Activated CD4-positive, alpha-beta memory T cell treated with anti-CD3 and anti-CD28 coated beads for 36 hours (primary cell): ENCODE measurements at regions of chr15 and their contacts with region 1.

Region 1: DNA sequence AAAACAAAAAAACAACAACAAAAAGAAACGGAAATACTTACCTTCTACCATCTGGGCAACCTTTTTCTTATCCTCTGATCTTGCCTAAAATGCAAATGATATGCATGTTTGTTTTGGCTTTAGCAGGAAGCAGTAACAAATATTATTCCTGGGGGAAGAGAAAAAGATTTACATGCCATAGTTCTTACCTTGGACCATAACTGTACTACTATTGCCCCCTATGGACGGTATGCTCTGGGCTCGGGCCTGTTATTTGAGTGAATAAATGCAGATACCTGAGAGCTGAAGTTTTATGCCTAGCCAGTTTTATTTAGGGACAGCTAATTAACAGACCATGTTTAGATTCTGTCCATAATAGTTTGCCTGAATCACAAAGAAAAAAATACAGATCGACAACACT is 12.6 kb upstream of the STARD5 start:
- DNase-seq: peak; percentile 51
- H3K4me3 Mint-ChIP-seq: no peak overlapping the region
- H3K27ac Mint-ChIP-seq: no peak overlapping the region
- H3K4me1 Mint-ChIP-seq: peaks cover 8% of the 10 kb centered on the region
- H3K27me3 Mint-ChIP-seq: no peaks in the 10 kb centered on the region

Region 2: DNA sequence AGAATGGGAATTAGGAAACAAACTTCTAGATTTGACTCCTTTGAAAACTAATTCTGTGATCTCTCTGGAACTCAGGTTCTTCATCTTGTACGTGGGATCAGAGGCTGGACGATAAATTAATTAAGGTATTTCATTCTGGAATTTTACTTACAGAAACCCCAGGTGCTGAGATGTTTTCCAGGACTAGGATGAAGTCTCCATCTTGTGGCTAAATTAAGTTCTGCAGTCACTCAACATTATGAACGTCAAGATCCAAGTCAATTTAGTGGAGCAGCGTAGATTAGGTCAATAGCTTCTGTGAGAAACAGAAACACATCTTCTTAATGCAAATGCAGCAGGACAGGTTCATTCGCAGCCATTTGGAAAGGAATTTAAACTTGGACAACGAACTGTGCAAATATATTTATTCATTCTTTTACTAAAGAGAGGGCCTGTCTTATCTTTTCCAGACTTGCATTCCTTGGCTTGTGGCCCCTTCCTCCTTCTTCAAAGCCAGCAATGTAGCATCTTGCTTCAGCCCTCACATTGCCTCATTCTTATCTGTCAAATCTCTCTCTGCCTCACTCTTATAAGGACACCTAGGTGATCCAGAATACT is 64.2 kb after region 1 on chr15:
- CTCF ChIA-PET with region 1: interaction called, 3 read pairs
- POLR2A ChIA-PET with region 1: no interaction called
- intact Hi-C with region 1: loop called (anchors 10 kb)
- DNase-seq: no peak
- H3K4me3 Mint-ChIP-seq: no peak overlapping the region
- H3K27ac Mint-ChIP-seq: no peak overlapping the region
- H3K4me1 Mint-ChIP-seq: no peaks in the 10 kb centered on the region
- H3K27me3 Mint-ChIP-seq: no peaks in the 10 kb centered on the region